GM10248 (cell line): ENCODE measurements at regions of chr17 and their contacts with region 1.

Region 1: DNA sequence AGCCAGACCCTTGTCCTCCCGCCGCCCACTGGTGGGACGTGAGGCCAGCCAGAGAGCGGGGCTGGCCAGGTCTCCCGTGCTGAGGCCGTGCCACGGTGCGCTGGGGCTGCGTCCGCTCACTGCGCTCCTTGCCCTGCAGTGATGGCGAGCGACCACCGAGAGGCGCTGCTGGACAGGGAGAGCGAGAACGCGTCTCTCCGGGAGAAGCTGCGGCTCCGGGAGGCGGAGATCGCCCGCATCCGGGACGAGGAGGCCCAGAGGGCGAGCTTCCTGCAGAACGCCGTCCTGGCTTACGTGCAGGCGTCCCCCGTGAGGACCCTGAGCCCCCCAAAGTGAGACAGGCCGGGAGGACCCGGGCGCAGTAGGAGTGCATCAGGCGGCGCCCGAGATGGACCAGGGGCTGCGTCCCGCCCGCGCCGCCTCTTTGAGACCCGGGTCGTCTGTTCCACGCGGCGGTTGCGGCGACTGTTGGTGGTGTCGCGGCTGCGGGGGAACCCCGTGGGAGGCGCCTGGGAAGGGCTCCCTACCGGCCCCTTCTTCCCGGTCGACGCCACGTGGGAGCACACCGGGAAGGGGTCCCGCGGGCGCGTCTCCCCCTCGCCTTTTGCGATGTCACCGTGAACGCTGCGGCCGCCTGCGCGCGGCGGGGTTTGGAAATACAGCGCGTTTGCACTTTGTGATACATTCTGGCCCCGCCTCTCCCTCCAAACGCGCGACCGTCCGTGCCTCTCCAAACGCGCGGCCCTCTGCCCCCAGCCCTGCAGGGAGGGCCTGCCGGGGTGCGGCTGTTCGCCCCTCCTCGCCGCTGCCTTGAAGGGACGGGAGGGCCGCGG is 792 bp upstream of the RAC3 start:
- DNase-seq: peak; percentile 86
- CTCF ChIP-seq: peak; percentile 96

Region 2: GRCh38 chr17:81977211-81978027 is 53.3 kb before region 1 on chr17 and contains the start of gene ASPSCR1:
- CTCF ChIA-PET with region 1: no interaction called
- POLR2A ChIA-PET with region 1: no interaction called
- DNase-seq: peak; percentile 96
- CTCF ChIP-seq: no peak

Region 3: GRCh38 chr17:82051776-82052637 is 21.3 kb after region 1 on chr17 and contains the starts of genes GPS1 and RFNG:
- CTCF ChIA-PET with region 1: interaction called, 14 read pairs
- POLR2A ChIA-PET with region 1: no interaction called
- DNase-seq: peak; percentile 94
- CTCF ChIP-seq: no peak

Region 4: GRCh38 chr17:82105882-82106687 is 75.4 kb after region 1 on chr17:
- CTCF ChIA-PET with region 1: interaction called, 17 read pairs
- POLR2A ChIA-PET with region 1: no interaction called
- DNase-seq: peak; percentile 92
- CTCF ChIP-seq: peak; percentile 49

Region 5: GRCh38 chr17:82153745-82154375 is 123.2 kb after region 1 on chr17:
- CTCF ChIA-PET with region 1: interaction called, 87 read pairs
- POLR2A ChIA-PET with region 1: no interaction called
- DNase-seq: peak; percentile 92
- CTCF ChIP-seq: peak; percentile 94

Region 6: DNA sequence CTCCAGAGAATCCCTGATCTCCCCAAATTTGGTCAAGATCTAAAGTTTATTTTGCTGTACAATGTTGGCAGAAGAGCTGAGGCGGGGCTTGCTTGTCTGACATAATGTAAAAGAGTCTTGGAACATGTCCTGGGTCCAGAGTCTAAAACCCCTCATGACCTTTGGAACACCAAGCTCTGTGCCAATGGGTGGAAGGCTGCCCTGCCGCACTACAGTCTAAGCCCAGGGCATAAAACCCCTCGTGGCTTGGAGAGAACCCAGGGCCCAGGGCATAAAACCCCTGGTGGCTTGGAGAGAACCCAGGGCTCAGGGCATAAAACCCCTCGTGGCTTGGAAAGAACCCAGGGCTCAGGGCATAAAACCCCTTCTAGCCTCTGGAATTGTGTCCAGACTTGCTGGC is 145.3 kb after region 1 on chr17:
- CTCF ChIA-PET with region 1: no interaction called
- POLR2A ChIA-PET with region 1: no interaction called
- DNase-seq: no peak
- CTCF ChIP-seq: no peak

Region 7: DNA sequence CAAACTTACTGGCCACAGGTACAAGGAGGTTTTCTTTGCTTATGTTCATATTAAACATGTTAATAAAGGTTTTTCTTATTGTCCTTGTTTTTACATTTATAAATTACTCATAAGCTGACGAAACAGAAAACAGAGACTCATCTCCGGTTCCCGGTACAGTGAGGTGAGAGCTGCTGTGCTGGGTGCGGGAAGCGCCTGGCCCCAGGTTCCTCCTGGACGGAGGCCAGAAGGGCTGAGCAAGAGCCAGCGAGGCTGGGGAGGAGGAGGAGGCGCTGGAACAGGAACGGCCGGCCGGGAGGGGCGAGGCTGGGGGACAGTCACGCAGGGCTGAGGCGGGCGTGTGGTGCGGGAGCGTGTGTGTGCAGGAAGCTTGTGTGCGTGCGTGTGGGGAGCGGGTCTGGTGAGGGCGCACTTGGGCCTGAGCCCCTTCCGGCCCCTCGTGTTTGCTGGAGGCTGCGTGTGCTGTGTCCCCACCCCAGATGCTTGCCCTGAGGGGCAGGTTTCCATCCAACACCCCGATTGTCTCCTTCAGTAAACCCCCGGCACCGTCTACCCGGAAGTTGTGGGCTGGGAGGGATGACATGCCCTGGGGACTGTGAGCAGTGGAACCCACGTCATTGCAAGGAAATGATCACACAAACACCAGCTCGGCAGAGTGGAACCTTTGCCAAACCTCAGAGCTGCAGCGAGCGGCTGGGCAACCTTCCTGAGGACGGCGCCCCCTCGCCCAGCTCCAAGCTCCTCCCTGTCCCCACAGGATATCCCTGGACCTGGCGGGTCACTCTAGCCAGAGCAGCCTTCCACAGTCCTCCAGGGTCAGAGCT is 267.2 kb after region 1 on chr17:
- CTCF ChIA-PET with region 1: interaction called, 10 read pairs
- POLR2A ChIA-PET with region 1: no interaction called
- DNase-seq: peak; percentile 88
- CTCF ChIP-seq: peak; percentile 4